PC-9 (cell line): ENCODE measurements at regions of chr2 and their contacts with region 1.

Region 1: GRCh38 chr2:69724540-69725159 is 17.3 kb upstream of the ANXA4 start:
- DNase-seq: peak; percentile 62 to 84
- H3K4me3 ChIP-seq: no peak overlapping the region
- H3K27ac ChIP-seq: no peak overlapping the region
- H3K4me1 ChIP-seq: no peaks in the 10 kb centered on the region
- H3K27me3 ChIP-seq: no peaks in the 10 kb centered on the region
- CTCF ChIP-seq: peak; percentile 95

Region 2: GRCh38 chr2:69601179-69601612 is 123.5 kb before region 1 on chr2:
- CTCF ChIA-PET with region 1: no interaction called
- POLR2A ChIA-PET with region 1: interaction called, 24 read pairs
- intact Hi-C with region 1: no loop called
- DNase-seq: peak; percentile 2 to 94
- H3K4me3 ChIP-seq: no peak overlapping the region
- H3K27ac ChIP-seq: peak overlapping the region; percentile 30
- H3K4me1 ChIP-seq: peaks cover 33% of the 10 kb centered on the region
- H3K27me3 ChIP-seq: no peaks in the 10 kb centered on the region
- CTCF ChIP-seq: no peak

Region 3: GRCh38 chr2:69779258-69780001 is 54.8 kb after region 1 on chr2:
- CTCF ChIA-PET with region 1: interaction called, 26 read pairs
- POLR2A ChIA-PET with region 1: no interaction called
- intact Hi-C with region 1: no loop called
- DNase-seq: peak; percentile 27 to 77
- H3K4me3 ChIP-seq: no peak overlapping the region
- H3K27ac ChIP-seq: 0 out of 2 replicates have a peak overlapping the region, but pooled peaks have one; percentile 4
- H3K4me1 ChIP-seq: peaks cover 56% of the 10 kb centered on the region
- H3K27me3 ChIP-seq: no peaks in the 10 kb centered on the region
- CTCF ChIP-seq: no peak

Region 4: GRCh38 chr2:69816923-69817542 is 92.4 kb after region 1 on chr2:
- CTCF ChIA-PET with region 1: interaction called, 47 read pairs
- POLR2A ChIA-PET with region 1: no interaction called
- intact Hi-C with region 1: loop called (anchors 1 kb)
- DNase-seq: peak; percentile 59 to 81
- H3K4me3 ChIP-seq: no peak overlapping the region
- H3K27ac ChIP-seq: no peak overlapping the region
- H3K4me1 ChIP-seq: no peaks in the 10 kb centered on the region
- H3K27me3 ChIP-seq: no peaks in the 10 kb centered on the region
- CTCF ChIP-seq: peak; percentile 96

Region 5: GRCh38 chr2:70647873-70648481 is 923.3 kb after region 1 on chr2:
- CTCF ChIA-PET with region 1: no interaction called
- POLR2A ChIA-PET with region 1: no interaction called
- intact Hi-C with region 1: loop called (anchors 10 kb)
- DNase-seq: peak; percentile 53 to 78
- H3K4me3 ChIP-seq: no peak overlapping the region
- H3K27ac ChIP-seq: no peak overlapping the region
- H3K4me1 ChIP-seq: no peaks in the 10 kb centered on the region
- H3K27me3 ChIP-seq: no peaks in the 10 kb centered on the region
- CTCF ChIP-seq: peak; percentile 95